CD4-positive, alpha-beta T cell (primary cell): ENCODE measurements at regions of chr6 and their contacts with region 1.

Region 1: GRCh38 chr6:155327326-155328073 is 13.2 kb upstream of the TFB1M start:
- DNase-seq: peak; percentile 39 to 82 (median 57)
- ATAC-seq: peak; percentile 68
- H3K4me3 ChIP-seq: no peak overlapping the region
- H3K4me3 Mint-ChIP-seq: no peak overlapping the region
- H3K27ac ChIP-seq: no peak overlapping the region
- H3K27ac Mint-ChIP-seq: no peak overlapping the region
- H3K4me1 ChIP-seq: no peaks in the 10 kb centered on the region
- H3K4me1 Mint-ChIP-seq: peaks cover 13% of the 10 kb centered on the region
- H3K27me3 ChIP-seq: no peaks in the 10 kb centered on the region
- H3K27me3 Mint-ChIP-seq: no peaks in the 10 kb centered on the region
- CTCF ChIP-seq: peak; percentile 93

Region 2: DNA sequence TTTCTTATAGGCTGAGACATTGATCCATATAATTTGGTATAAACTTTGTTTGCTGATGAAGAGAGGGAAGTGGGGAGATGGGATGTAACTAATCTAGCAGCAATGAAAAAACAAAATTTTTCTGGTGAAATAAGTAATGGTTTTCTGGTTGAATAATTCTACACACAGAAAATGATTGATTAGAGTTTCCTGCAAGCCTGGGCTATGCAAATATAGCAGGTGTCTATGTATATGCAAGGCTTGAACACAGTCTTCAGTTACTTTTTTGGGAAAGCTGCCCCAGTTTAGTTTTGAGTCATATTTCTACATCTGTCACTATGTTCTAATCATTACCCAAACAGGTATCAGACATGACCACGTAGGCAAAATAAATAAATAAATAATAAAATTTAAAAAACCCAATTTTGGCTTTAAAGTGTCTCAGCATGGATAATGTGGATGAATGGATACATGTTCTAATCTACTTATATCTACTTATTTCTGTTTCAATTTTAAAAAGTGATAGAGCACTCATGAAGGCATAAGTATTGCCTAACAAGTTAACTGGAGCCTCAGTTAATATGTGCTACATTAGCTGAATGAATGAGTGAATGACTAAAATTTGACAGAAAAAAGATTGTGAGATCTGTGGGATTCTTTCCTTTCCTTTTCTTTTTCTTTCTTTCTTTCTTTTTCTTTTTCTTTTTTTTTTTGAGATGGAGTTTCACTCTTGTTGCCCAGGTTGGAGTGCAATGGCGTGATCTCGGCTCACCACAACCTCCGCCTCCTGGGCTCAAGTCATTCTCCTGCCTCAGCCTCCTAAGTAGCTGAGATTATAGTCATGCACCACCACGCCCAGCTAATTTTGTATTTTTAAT is 24.0 kb after region 1 on chr6:
- CTCF ChIA-PET with region 1: no interaction called
- POLR2A ChIA-PET with region 1: no interaction called
- intact Hi-C with region 1: no loop called
- DNase-seq: no peak
- ATAC-seq: no peak
- H3K4me3 ChIP-seq: no peak overlapping the region
- H3K4me3 Mint-ChIP-seq: no peak overlapping the region
- H3K27ac ChIP-seq: no peak overlapping the region
- H3K27ac Mint-ChIP-seq: no peak overlapping the region
- H3K4me1 ChIP-seq: no peaks in the 10 kb centered on the region
- H3K4me1 Mint-ChIP-seq: no peaks in the 10 kb centered on the region
- H3K27me3 ChIP-seq: no peaks in the 10 kb centered on the region
- H3K27me3 Mint-ChIP-seq: no peaks in the 10 kb centered on the region
- CTCF ChIP-seq: no peak

Region 3: DNA sequence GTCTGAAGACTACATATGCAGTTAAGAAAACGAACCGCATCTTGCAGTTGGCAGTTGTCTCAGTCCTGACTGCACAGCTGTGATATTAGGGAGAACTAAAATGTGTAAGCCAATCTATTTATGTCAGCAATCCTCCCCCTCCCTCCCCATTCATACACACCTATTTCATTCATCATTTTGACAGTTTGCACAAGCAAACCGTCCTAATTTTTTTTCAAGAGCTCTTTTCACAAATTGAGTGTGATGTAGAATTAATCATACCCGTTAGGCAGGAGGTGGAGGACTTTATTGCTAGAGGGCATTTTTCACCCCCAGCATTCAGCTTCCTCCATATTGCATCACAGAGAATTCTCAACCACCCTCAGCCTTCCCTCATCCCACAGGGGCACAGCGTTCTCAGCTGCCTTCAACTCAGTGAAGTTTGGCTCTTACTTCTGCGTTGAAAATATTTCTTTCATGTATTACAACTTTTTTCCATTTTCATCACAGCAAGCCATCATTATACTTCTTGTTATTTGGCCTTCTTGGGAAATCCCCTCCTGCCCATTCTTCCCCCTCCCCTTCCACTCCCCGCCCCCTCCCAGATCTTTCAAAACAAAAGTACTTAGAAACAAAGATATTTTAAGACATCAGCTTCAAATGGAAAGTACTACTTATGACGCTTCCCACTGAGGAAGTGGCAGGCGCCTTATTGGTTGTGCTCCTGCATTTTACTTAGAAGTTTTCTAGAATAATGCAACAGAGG is 90.7 kb after region 1 on chr6:
- CTCF ChIA-PET with region 1: no interaction called
- POLR2A ChIA-PET with region 1: interaction called, 3 read pairs
- intact Hi-C with region 1: loop called in 1 of 2 experiments (anchors 1 kb)
- DNase-seq: peak; percentile 28 to 89 (median 47)
- ATAC-seq: peak; percentile 85
- H3K4me3 ChIP-seq: peak overlapping the region; percentile 40
- H3K4me3 Mint-ChIP-seq: peak overlapping the region; percentile 75
- H3K27ac ChIP-seq: peak overlapping the region; percentile 69 to 86
- H3K27ac Mint-ChIP-seq: peak overlapping the region; percentile 94
- H3K4me1 ChIP-seq: peaks cover 19% of the 10 kb centered on the region
- H3K4me1 Mint-ChIP-seq: peaks cover 51% of the 10 kb centered on the region
- H3K27me3 ChIP-seq: no peaks in the 10 kb centered on the region
- H3K27me3 Mint-ChIP-seq: no peaks in the 10 kb centered on the region
- CTCF ChIP-seq: no peak

Region 4: DNA sequence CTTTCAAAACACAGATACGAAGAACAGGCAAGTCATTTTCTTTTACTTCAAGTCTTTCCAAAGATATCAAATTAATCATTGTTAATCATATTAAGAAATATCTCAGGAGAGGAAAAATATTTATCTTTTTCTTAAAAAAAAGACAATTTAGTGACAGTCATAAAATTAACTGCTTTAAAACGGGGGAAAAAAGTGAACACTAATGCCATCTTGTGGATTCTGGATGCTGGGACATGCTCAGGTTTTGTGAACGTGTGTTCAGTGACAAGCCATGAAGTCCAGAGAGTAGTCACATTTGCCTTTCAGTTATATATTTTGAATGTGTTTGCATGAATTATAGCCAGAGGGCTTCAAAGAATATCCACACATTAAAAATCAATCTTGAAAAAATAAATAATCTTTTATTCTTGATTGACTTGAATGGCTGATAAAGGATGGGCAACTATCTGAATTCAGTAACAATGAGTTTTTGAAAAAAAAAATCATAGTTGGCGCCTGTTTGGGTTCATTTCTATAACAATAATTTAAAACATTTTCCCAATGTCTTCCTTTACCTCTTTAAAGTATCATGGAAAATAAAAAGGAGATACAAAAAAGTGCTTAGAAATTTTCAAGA is 202.8 kb after region 1 on chr6:
- CTCF ChIA-PET with region 1: interaction called, 3 read pairs
- POLR2A ChIA-PET with region 1: no interaction called
- intact Hi-C with region 1: loop called (anchors 1 kb)
- DNase-seq: peak in 4 of 14 experiments; percentile 8 to 55 (median 32)
- ATAC-seq: no peak
- H3K4me3 ChIP-seq: no peak overlapping the region
- H3K4me3 Mint-ChIP-seq: no peak overlapping the region
- H3K27ac ChIP-seq: no peak overlapping the region
- H3K27ac Mint-ChIP-seq: no peak overlapping the region
- H3K4me1 ChIP-seq: no peaks in the 10 kb centered on the region
- H3K4me1 Mint-ChIP-seq: peaks cover 7% of the 10 kb centered on the region
- H3K27me3 ChIP-seq: no peaks in the 10 kb centered on the region
- H3K27me3 Mint-ChIP-seq: no peaks in the 10 kb centered on the region
- CTCF ChIP-seq: peak; percentile 55

Region 5: GRCh38 chr6:155795173-155795796 is 467.8 kb after region 1 on chr6:
- CTCF ChIA-PET with region 1: no interaction called
- POLR2A ChIA-PET with region 1: no interaction called
- intact Hi-C with region 1: no loop called
- DNase-seq: no peak
- ATAC-seq: no peak
- H3K4me3 ChIP-seq: no peak overlapping the region
- H3K4me3 Mint-ChIP-seq: no peak overlapping the region
- H3K27ac ChIP-seq: no peak overlapping the region
- H3K27ac Mint-ChIP-seq: no peak overlapping the region
- H3K4me1 ChIP-seq: no peaks in the 10 kb centered on the region
- H3K4me1 Mint-ChIP-seq: no peaks in the 10 kb centered on the region
- H3K27me3 ChIP-seq: no peaks in the 10 kb centered on the region
- H3K27me3 Mint-ChIP-seq: no peaks in the 10 kb centered on the region
- CTCF ChIP-seq: no peak

Region 6: DNA sequence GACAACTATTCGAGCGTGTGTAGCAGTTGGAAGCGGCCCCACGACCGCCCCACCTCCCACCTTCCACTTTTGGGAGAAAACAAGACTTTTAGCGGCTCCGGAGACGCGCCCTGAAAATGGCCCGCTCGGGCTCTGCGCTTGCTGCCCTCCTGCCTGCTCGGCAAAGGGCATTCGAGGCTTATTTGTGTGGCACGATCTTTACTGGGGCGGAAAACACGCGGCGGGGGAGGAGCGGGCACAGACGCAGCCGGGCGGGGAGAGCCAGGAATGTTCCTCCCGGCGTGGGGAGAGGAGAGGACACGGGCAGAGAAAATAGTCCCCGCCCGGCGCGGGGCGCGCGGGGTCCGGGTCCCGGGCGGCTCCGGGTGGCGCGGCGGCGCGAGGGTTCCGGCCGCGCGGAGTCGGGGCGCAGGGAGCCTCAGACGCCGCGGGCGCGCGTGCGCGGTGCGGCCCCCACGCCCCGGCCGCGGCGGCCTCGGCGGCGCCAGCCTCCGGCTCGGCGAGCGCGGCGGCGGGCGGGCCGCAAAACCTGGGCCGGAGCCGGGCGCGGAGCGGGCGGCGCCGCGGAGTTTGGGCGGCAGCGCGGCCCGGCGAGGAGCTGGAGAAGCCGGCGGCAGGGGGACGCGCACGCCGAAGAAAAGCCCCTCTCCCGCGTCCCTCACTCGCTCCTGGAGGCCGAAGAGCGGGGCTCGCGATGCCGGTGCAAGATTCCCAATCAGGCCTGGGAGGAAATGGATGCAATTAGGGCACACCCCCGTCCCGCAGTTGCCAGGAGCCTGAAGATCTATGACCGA is 1359.7 kb after region 1 on chr6:
- CTCF ChIA-PET with region 1: no interaction called
- POLR2A ChIA-PET with region 1: no interaction called
- intact Hi-C with region 1: loop called in 1 of 2 experiments (anchors 10 kb)
- DNase-seq: peak; percentile 53 to 94 (median 76)
- ATAC-seq: peak; percentile 76
- H3K4me3 ChIP-seq: peak overlapping the region; percentile 82
- H3K4me3 Mint-ChIP-seq: peak overlapping the region; percentile 92
- H3K27ac ChIP-seq: peak overlapping the region; percentile 91 to 97
- H3K27ac Mint-ChIP-seq: peak overlapping the region; percentile 92
- H3K4me1 ChIP-seq: peaks cover 14% of the 10 kb centered on the region
- H3K4me1 Mint-ChIP-seq: peaks cover 24% of the 10 kb centered on the region
- H3K27me3 ChIP-seq: no peaks in the 10 kb centered on the region
- H3K27me3 Mint-ChIP-seq: no peaks in the 10 kb centered on the region
- CTCF ChIP-seq: no peak

Region 7: GRCh38 chr6:157184202-157185020 is 1856.9 kb after region 1 on chr6:
- CTCF ChIA-PET with region 1: no interaction called
- POLR2A ChIA-PET with region 1: no interaction called
- intact Hi-C with region 1: loop called in 1 of 2 experiments (anchors 1 kb)
- DNase-seq: peak; percentile 35 to 75 (median 54)
- ATAC-seq: peak; percentile 85
- H3K4me3 ChIP-seq: no peak overlapping the region
- H3K4me3 Mint-ChIP-seq: no peak overlapping the region
- H3K27ac ChIP-seq: no peak overlapping the region
- H3K27ac Mint-ChIP-seq: no peak overlapping the region
- H3K4me1 ChIP-seq: peaks cover 16% of the 10 kb centered on the region
- H3K4me1 Mint-ChIP-seq: peaks cover 21% of the 10 kb centered on the region
- H3K27me3 ChIP-seq: no peaks in the 10 kb centered on the region
- H3K27me3 Mint-ChIP-seq: no peaks in the 10 kb centered on the region
- CTCF ChIP-seq: peak; percentile 63